Head of caudate nucleus (tissue), 42 donors: ENCODE measurements at regions of chr14 and their contacts with region 1.

Region 1: DNA sequence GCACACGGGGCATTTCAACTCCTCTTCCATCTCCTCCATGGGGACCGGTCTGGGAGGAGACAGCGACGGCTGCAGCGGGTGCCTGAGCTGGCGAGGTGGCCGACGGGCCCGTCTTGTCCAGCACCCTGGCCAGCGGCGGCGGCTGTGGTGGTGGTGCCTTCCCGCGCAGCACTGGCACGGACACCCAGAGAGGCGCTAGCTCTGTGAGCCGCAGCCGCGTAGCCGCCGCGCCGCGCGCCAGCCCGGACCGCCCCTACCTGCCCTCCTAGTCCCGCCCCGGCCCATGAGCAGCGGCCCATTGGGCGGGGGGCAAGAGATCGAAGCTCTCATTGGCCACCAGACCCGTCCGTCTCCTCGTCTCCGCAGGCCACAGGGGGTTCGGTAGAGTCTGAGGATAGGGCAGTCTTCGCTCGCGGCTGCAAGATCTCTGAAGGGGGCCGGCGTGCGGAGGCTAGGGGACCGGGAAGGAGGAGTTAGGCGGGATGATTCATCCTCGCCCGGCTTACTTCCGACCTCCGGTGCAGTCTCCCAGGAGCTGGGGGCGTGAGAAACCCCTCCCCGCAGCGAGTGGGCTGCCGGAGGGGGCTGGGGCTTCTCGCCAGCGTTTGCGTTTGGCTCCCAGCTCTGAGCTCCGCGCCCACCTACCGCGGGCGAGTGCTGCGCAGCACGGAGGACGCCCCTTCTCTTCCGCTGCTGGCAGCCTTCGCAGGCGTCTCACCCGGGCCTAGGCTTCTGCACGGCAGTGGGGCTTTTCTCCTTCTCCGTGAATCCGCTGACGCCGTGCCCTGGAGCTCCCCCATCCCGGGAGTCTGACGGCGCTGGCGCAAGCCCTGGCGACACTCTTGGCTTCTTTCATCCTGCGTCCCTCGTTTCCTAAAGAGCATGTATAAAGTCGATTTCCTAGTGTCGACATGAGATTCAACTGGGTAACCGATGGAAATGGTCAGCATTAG is at the start of gene TRIM9:
- DNase-seq: peak; percentile 98 to 100 (median 99)

Region 2: GRCh38 chr14:51006781-51007211 is 88.4 kb before region 1 on chr14:
- intact Hi-C with region 1: loop called (anchors 5 kb)
- DNase-seq: peak in 41 of 42 donors; percentile 47 to 93 (median 73)

Region 3: DNA sequence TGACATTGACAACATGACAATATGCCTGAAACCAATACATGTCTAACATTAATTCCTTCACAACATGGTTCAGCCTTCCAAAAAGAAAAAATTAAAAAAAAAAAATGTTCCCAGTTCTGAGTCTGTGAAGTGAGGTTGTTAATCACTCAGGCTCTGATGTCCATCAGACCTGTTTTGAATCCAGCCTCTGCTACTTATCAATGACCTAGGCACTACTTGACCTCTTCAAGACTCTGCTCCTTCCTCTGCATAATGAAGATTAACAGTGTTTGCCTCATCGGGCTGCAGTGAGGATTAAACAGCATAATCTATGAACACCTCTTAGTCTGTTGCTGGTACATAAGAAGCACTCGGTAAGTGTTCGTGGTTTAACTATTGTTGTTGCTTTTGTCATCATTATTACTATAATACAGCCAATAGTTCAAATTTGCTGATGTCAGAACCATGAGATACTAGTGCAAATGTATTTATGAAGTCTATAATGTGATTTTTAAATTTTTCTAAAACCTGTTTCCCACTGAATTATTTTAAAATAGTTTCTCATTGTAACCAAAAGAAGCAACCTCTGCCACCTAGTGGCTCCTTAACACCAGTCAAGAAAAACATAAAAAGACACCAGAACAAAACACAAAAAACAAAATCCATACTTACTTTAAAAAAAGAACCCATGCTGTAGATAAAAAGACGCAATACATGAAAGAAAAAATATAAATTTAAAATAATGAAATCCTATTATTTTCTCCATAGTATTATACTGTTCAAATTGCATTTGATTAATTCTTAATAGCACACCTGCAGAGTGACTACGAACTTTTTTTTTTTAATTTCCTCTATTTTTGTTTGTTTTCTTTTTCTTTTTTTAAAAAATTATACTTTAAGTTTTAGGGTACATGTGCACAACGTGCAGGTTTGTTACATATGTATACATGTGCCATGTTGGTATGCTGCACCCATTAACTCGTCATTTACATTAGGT is 124.6 kb after region 1 on chr14:
- intact Hi-C with region 1: loop called (anchors 10 kb)
- DNase-seq: peak in 15 of 42 donors; percentile 11 to 68 (median 31)